MCF 10A (cell line): ENCODE measurements at regions of chr11 and their contacts with region 1.

Region 1: GRCh38 chr11:102780491-102780918 is at the start of gene MMP10:
- DNase-seq: peak; percentile 65
- H3K4me3 Mint-ChIP-seq: no peak within 1 kb of the TSS
- H3K27ac Mint-ChIP-seq: no peak within 1 kb of the TSS
- H3K4me1 Mint-ChIP-seq: peaks cover 13% of the 10 kb centered on the region
- H3K27me3 Mint-ChIP-seq: no peaks in the 10 kb centered on the region
- CTCF ChIP-seq: peak; percentile 39
- total RNA-seq, gene MMP10: 0.29 and 0.75 TPM in 2 replicates

Region 2: DNA sequence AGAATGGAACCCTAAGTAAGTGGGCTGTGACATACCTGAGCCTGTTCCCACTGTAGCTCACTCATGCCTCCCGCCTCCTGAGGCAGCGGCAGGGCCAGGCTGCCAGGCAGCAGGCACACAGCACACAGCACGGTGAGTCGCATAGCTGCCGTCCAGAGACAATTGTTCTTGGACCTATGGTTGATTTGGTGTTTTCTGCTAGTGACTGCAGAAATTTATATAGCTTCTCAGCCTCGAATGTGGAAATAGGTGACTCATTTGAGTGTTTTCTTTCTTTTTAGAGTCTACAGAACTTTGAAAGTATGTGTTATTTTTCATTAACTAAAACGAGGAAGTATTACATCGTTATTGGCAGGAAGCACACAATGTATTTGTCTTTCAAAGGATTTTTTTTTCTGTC is 249.9 kb before region 1 on chr11 and contains the start of gene MMP7:
- CTCF ChIA-PET with region 1: no interaction called
- POLR2A ChIA-PET with region 1: no interaction called
- intact Hi-C with region 1: no loop called
- DNase-seq: peak; percentile 61
- H3K4me3 Mint-ChIP-seq: peak within 1 kb of the TSS; percentile 56
- H3K27ac Mint-ChIP-seq: peak within 1 kb of the TSS; percentile 81
- H3K4me1 Mint-ChIP-seq: peaks cover 14% of the 10 kb centered on the region
- H3K27me3 Mint-ChIP-seq: no peaks in the 10 kb centered on the region
- CTCF ChIP-seq: no peak
- total RNA-seq, gene MMP7: not detected in 2 replicates

Region 3: DNA sequence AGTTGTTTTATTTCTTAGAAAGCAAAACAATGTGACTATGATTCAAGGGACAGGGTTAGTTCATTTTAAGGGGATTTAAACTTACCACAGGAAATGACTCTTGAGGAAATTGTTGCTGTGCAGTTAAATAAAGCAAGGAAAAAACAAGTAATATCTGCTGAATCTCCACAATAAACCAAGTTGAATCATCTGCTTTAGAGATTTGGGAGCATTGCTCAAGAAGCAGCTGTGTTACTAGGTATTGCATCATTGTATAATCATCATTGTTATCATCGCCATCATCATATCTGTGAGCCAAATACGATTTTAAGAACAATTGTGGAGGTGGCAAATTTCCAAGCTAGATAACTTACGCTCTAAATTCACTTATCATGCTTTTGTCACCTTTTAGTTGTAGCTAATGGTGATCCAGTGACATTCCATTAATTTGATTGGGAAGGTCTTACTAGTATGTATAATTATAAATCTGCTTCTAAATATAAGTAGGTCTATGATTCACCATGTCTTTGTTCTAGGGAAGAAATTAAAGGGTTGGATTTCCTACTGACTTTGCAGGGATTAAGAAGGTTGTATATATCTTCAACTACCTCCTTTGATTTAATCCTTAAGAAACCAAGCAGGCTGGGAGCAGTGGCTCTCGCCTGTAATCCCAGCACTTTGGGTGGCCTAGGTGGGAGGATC is 20.0 kb before region 1 on chr11:
- CTCF ChIA-PET with region 1: interaction called, 5 read pairs
- POLR2A ChIA-PET with region 1: interaction called, 11 read pairs
- intact Hi-C with region 1: no loop called
- DNase-seq: peak; percentile 80
- H3K4me3 Mint-ChIP-seq: no peak overlapping the region
- H3K27ac Mint-ChIP-seq: peak overlapping the region; percentile 57
- H3K4me1 Mint-ChIP-seq: peaks cover 22% of the 10 kb centered on the region
- H3K27me3 Mint-ChIP-seq: no peaks in the 10 kb centered on the region
- CTCF ChIP-seq: no peak

Region 4: GRCh38 chr11:102802341-102802740 is 21.8 kb after region 1 on chr11:
- CTCF ChIA-PET with region 1: interaction called, 12 read pairs
- POLR2A ChIA-PET with region 1: interaction called, 7 read pairs
- intact Hi-C with region 1: no loop called
- DNase-seq: peak; percentile 63
- H3K4me3 Mint-ChIP-seq: no peak overlapping the region
- H3K27ac Mint-ChIP-seq: no peak overlapping the region
- H3K4me1 Mint-ChIP-seq: peaks cover 6% of the 10 kb centered on the region
- H3K27me3 Mint-ChIP-seq: no peaks in the 10 kb centered on the region
- CTCF ChIP-seq: no peak

Region 5: DNA sequence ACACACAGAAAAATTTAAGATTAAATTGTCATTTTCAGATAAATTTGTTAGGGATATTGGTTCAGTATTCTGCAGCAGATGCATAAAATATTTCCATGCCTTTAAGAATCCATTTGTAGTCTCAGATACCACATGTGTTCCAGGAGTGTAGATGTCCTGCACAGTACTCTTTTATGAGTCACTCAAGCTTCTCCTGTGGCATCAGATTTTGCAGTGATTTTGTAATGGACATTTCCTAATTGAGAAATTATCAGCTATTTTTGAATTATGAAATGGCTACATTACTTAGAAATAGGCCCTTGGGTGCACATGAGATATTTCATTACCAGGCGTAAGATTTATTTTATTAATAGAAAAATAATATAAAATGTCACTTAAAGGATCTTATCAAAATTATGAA is 44.1 kb after region 1 on chr11:
- CTCF ChIA-PET with region 1: no interaction called
- POLR2A ChIA-PET with region 1: no interaction called
- intact Hi-C with region 1: no loop called
- DNase-seq: peak; percentile 51
- H3K4me3 Mint-ChIP-seq: no peak overlapping the region
- H3K27ac Mint-ChIP-seq: no peak overlapping the region
- H3K4me1 Mint-ChIP-seq: peaks cover 2% of the 10 kb centered on the region
- H3K27me3 Mint-ChIP-seq: no peaks in the 10 kb centered on the region
- CTCF ChIP-seq: no peak